Panc1 (cell line): ENCODE measurements at regions of chr4 and their contacts with region 1.

Region 1: GRCh38 chr4:112031712-112032328 is 113.4 kb upstream of the FAM241A start:
- DNase-seq: peak; percentile 22
- ATAC-seq: no peak
- H3K4me3 ChIP-seq: no peak overlapping the region
- H3K27ac ChIP-seq: no peak overlapping the region
- H3K4me1 ChIP-seq: no peaks in the 10 kb centered on the region
- H3K27me3 ChIP-seq: no peaks in the 10 kb centered on the region
- CTCF ChIP-seq: peak; percentile 53; the same call in 1 of the 2 replicates

Region 2: DNA sequence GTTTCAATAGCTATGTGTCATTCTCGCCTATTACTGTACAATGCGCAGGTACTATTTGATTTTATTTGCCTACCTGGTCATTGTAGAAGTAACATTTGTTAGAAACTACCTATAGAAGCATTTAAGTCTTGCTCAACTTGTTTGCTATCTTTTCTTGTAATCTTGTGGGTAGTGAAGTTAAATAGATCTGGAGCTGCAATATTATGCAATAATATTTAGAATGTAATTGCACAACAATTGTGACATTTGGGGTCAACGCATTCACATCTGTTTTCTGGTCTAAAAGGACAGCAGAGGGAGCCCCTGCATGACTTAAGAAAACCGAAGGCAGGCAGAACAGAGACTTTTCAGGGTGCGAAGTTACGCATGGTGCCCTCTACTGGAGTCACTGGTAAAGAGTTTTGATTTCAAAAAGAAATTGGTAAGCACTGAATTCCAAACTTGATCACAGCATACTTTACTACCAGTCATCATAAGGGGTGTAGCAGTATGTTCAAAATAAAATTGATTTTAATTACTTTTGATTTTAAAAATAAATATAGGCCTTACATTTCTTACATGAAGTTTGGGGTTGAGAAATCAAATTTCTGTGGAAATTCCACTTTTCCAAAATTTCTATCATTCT is 389.8 kb before region 1 on chr4:
- CTCF ChIA-PET with region 1: no interaction called
- POLR2A ChIA-PET with region 1: no interaction called
- in situ Hi-C with region 1: no loop called
- intact Hi-C with region 1: loop called (anchors 2 kb)
- DNase-seq: peak; percentile 63
- ATAC-seq: peak; percentile 78
- H3K4me3 ChIP-seq: no peak overlapping the region
- H3K27ac ChIP-seq: no peak overlapping the region
- H3K4me1 ChIP-seq: no peaks in the 10 kb centered on the region
- H3K27me3 ChIP-seq: no peaks in the 10 kb centered on the region
- CTCF ChIP-seq: peak; percentile 86

Region 3: GRCh38 chr4:111854494-111855087 is 177.2 kb before region 1 on chr4:
- CTCF ChIA-PET with region 1: interaction called, 3 read pairs
- POLR2A ChIA-PET with region 1: no interaction called
- in situ Hi-C with region 1: no loop called
- intact Hi-C with region 1: loop called (anchors 10 kb)
- DNase-seq: peak; percentile 8
- ATAC-seq: no peak
- H3K4me3 ChIP-seq: no peak overlapping the region
- H3K27ac ChIP-seq: no peak overlapping the region
- H3K4me1 ChIP-seq: no peaks in the 10 kb centered on the region
- H3K27me3 ChIP-seq: no peaks in the 10 kb centered on the region
- CTCF ChIP-seq: peak; percentile 61; the same call in 1 of the 2 replicates

Region 4: GRCh38 chr4:111943795-111944203 is 88.0 kb before region 1 on chr4:
- CTCF ChIA-PET with region 1: no interaction called
- POLR2A ChIA-PET with region 1: interaction called, 3 read pairs
- in situ Hi-C with region 1: no loop called
- intact Hi-C with region 1: loop called (anchors 5 kb)
- DNase-seq: no peak
- ATAC-seq: peak; percentile 74; the same call in 1 of the 2 replicates
- H3K4me3 ChIP-seq: no peak overlapping the region
- H3K27ac ChIP-seq: no peak overlapping the region
- H3K4me1 ChIP-seq: no peaks in the 10 kb centered on the region
- H3K27me3 ChIP-seq: no peaks in the 10 kb centered on the region
- CTCF ChIP-seq: peak; percentile 64

Region 5: DNA sequence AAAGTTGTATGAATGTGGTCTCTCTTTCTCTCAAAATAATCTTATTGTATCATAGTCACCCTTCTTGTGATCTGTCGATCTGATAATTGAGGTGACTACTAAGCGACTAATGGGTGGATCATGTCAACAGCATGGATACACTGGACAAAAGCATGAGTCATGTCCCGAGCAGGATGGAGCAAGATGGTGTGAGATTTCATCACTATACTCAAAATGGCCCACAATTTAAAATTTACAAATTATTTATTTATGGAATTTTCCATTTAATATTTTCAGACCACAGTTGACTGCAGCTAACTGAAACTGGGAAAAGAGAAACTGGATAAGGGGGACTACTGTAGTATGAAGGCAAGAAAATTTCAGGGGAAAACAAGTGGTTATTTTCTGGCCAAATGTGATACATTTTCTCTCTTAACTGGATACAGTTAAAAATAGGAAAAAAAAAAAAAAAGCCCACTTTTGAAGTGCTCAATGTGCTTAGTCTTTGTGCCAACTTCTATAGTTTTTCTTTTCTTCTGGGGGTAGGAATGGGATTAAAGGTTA is 138.7 kb after region 1 on chr4:
- CTCF ChIA-PET with region 1: no interaction called
- POLR2A ChIA-PET with region 1: no interaction called
- in situ Hi-C with region 1: no loop called
- intact Hi-C with region 1: no loop called
- DNase-seq: peak; percentile 66
- ATAC-seq: peak; percentile 78; the same call in 1 of the 2 replicates
- H3K4me3 ChIP-seq: no peak overlapping the region
- H3K27ac ChIP-seq: peak overlapping the region; percentile 17; the same call in 1 of the 2 replicates
- H3K4me1 ChIP-seq: no peaks in the 10 kb centered on the region; the same call in 1 of the 2 replicates
- H3K27me3 ChIP-seq: no peaks in the 10 kb centered on the region
- CTCF ChIP-seq: no peak